Spleen (tissue), 13 donors: ENCODE measurements at regions of chr7 and their contacts with region 1.

Region 1: GRCh38 chr7:3897438-3898385 is 596.7 kb downstream of the SDK1 start:
- DNase-seq: no peak
- H3K4me3 ChIP-seq: no peak overlapping the region
- H3K27ac ChIP-seq: peak overlapping the region in 3 of 8 donors; percentile 70 to 73 (median 70)
- H3K4me1 ChIP-seq: peaks cover 0 to 16% (median 5%) of the 10 kb centered on the region in 6 donors
- H3K27me3 ChIP-seq: peaks cover 0 to 6% (median 0%) of the 10 kb centered on the region in 7 donors
- CTCF ChIP-seq: peak in 10 of 11 experiments; percentile 48 to 82 (median 73)
- POLR2A ChIP-seq: no peak

Region 2: DNA sequence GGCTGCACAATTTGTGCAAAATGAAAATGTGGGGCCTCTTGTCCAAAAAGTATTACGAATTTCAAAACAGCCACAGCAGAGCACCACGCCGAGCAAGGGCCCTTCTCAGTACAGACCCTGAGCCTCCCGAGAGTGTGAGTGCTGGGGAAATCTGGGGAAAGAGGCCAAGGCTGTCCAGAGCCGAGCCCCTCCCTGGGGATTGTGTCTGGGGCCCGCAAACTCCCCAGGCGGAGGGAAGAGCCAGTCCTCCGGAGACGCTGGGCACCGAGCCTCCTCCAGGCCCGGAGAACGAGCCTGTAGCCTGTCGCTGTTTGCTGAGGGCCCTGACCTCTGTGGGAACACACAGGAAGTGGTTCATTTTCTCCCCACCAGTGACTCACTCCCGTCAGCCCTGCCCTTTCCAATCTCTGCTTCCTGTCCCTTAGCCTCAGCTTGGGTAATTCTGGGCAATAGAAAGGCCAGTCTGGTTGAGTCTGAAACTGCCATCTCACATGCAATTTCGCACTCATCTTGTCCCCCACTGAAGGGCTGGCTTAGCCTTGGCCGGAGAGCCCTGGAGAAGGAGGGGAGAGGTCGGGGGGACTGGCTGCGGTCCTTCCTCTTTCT is 1034.1 kb before region 1 on chr7:
- intact Hi-C with region 1: loop called (anchors 10 kb)
- DNase-seq: peak; percentile 87
- H3K4me3 ChIP-seq: peak overlapping the region in 4 of 8 donors; percentile 4 to 23 (median 8)
- H3K27ac ChIP-seq: peak overlapping the region; percentile 67 to 92 (median 88)
- H3K4me1 ChIP-seq: peaks cover 19 to 37% (median 32%) of the 10 kb centered on the region in 6 donors
- H3K27me3 ChIP-seq: no peaks in the 10 kb centered on the region
- CTCF ChIP-seq: peak in 2 of 11 experiments; percentile 11 to 19
- POLR2A ChIP-seq: no peak

Region 3: GRCh38 chr7:3300651-3301378 is 596.9 kb before region 1 on chr7 and contains the start of gene SDK1:
- intact Hi-C with region 1: loop called (anchors 10 kb)
- DNase-seq: peak; percentile 97
- H3K4me3 ChIP-seq: peak within 1 kb of the TSS; percentile 53 to 79 (median 58)
- H3K27ac ChIP-seq: peak within 1 kb of the TSS in 6 of 8 donors; percentile 5 to 82 (median 64)
- H3K4me1 ChIP-seq: peaks cover 5 to 27% (median 18%) of the 10 kb centered on the region in 6 donors
- H3K27me3 ChIP-seq: peaks cover 0 to 42% (median 10%) of the 10 kb centered on the region in 7 donors
- CTCF ChIP-seq: peak; percentile 62 to 99 (median 94)
- POLR2A ChIP-seq: peak in 1 of 3 donors; percentile 21
- total RNA-seq, gene SDK1: 29.2 to 54.1 (median 39.0) TPM

Region 4: GRCh38 chr7:3636131-3636860 is 261.4 kb before region 1 on chr7:
- intact Hi-C with region 1: no loop called
- DNase-seq: no peak
- H3K4me3 ChIP-seq: no peak overlapping the region
- H3K27ac ChIP-seq: no peak overlapping the region
- H3K4me1 ChIP-seq: no peaks in the 10 kb centered on the region
- H3K27me3 ChIP-seq: no peaks in the 10 kb centered on the region
- CTCF ChIP-seq: no peak
- POLR2A ChIP-seq: no peak

Region 5: DNA sequence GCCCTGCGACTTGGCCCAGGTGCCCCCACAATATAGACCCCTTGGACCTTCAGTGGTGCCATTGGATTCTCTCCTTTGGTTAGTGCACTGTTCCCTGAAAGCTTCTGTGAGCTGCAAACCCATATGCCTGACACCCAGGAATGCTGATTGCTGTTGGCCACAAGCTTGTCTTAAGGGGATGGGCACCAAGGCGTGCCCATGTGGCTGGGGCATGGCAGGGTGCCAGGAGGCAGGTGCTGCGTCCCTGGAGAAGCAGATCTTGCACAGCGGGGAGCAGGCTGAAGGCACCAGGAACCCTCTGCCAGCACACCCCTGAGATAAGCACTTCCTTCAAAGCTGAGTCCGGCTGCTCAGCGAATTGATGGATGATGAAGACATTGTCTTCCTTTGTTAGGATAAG is 184.9 kb before region 1 on chr7:
- intact Hi-C with region 1: no loop called
- DNase-seq: no peak
- H3K4me3 ChIP-seq: no peak overlapping the region
- H3K27ac ChIP-seq: no peak overlapping the region
- H3K4me1 ChIP-seq: no peaks in the 10 kb centered on the region
- H3K27me3 ChIP-seq: no peaks in the 10 kb centered on the region
- CTCF ChIP-seq: no peak
- POLR2A ChIP-seq: no peak